ENCODE measurements at regions of chr5 and their contacts with region 1.

Region 1: GRCh38 chr5:149063017-149063687 is at the start of gene SH3TC2:
- DNase-seq: peak; percentile 12 to 93 (median 88)
- H3K4me3 ChIP-seq: peak within 1 kb of the TSS; percentile 12 to 72 (median 51)
- H3K27ac ChIP-seq: peak within 1 kb of the TSS; percentile 77 to 99 (median 95)
- H3K27me3 ChIP-seq: peaks cover 0 to 3% (median 0%) of the 10 kb centered on the region in 45 donors
- CTCF ChIP-seq: peak in 9 of 56 donors; percentile 8 to 31 (median 20)
- total RNA-seq, gene SH3TC2: 8.0 to 212 (median 45.8) TPM

Region 2: GRCh38 chr5:149035372-149035790 is 27.8 kb before region 1 on chr5:
- intact Hi-C with region 1: loop called in 1 of 2 experiments (anchors 2 kb)
- DNase-seq: peak; percentile 72 to 88 (median 82)
- H3K4me3 ChIP-seq: no peak overlapping the region
- H3K27ac ChIP-seq: peak overlapping the region in 25 of 59 donors; percentile 1 to 82 (median 24)
- H3K27me3 ChIP-seq: no peaks in the 10 kb centered on the region
- CTCF ChIP-seq: peak; percentile 60 to 95 (median 89)

Measured in dorsolateral prefrontal cortex (tissue), 120 donors.